Dendritic cell treated with granulocyte-macrophage colony-stimulating factor and Interleukin-4, amounts not matched to agents 40 ng/mL and 50 ng/mL, for 4 days (primary cell): ENCODE measurements at regions of chr3 and their contacts with region 1.

Region 1: DNA sequence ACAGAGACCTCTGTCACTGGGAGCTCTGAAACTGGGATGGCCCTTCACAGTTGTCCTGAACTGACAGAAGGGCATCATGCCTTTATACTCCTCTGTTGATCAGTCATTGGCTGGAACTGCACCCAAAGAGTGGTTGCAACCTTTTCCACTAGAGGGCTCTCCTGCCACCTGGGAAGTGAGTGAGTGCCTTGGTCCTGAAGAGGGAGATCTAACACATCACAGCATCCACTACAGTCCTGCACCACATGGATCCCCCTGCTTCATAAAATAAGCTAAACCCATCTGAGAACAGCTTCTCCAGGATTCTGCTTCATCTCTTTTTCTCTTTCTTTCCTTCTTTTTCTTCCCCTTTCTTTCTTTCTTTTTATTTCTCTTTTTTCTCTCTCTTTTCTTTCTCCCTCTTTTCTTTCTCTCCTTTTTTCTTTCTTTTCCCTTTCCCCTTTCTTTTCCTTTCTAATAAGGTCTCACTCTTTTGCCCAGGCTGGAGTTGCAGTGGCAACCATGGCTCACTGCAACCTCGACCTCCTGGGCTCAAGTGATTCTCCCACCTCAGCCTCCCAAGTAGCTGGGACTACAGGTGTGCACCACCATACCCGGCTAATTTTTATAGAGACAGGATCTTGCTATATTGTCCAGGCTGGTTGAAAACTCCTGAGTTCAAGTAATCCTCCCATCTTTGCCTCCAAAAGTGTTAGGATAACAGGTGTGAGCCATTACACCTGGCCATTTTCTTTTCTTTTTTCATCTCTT is 42.8 kb upstream of the RAF1 start:
- H3K4me3 Mint-ChIP-seq: no peak overlapping the region
- H3K27ac Mint-ChIP-seq: no peak overlapping the region
- H3K4me1 Mint-ChIP-seq: peaks cover 12% of the 10 kb centered on the region
- H3K27me3 Mint-ChIP-seq: peaks cover 5% of the 10 kb centered on the region

Region 2: DNA sequence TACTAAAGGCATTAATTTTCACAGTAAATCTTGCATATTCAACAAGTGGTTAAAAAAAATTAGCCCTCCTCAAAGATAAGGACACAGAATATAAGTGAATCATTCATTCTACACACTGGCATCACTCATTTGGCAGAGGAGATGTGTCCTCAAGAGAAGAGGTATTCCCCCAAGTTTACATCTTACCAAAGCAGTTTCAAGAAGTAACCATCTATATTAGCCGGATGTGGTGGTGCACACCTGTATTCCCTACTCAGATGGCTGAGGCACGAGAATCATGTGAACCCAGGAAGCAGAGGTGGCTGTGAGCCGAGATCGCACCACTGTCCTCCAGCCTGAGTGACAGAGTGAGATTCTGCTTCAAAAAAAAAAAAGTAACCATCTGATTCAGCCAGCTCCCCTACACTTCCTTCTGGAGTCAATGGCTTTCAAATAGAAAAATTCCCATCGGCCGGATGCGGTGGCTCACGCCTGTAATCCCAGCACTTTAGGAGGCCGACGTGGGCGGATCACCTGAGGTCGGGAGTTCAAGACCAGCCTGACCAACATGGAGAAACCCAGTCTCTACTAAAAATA is 58.2 kb before region 1 on chr3:
- intact Hi-C with region 1: no loop called
- H3K4me3 Mint-ChIP-seq: no peak overlapping the region
- H3K27ac Mint-ChIP-seq: peak overlapping the region; percentile 41
- H3K4me1 Mint-ChIP-seq: peaks cover 46% of the 10 kb centered on the region
- H3K27me3 Mint-ChIP-seq: no peaks in the 10 kb centered on the region

Region 3: GRCh38 chr3:12741209-12741608 is 34.5 kb after region 1 on chr3:
- intact Hi-C with region 1: no loop called
- H3K4me3 Mint-ChIP-seq: no peak overlapping the region
- H3K27ac Mint-ChIP-seq: no peak overlapping the region
- H3K4me1 Mint-ChIP-seq: no peaks in the 10 kb centered on the region
- H3K27me3 Mint-ChIP-seq: peaks cover 8% of the 10 kb centered on the region

Region 4: GRCh38 chr3:12810013-12810780 is 103.5 kb after region 1 on chr3:
- intact Hi-C with region 1: loop called (anchors 10 kb)
- H3K4me3 Mint-ChIP-seq: peak overlapping the region; percentile 74
- H3K27ac Mint-ChIP-seq: no peak overlapping the region
- H3K4me1 Mint-ChIP-seq: peaks cover 6% of the 10 kb centered on the region
- H3K27me3 Mint-ChIP-seq: peaks cover 17% of the 10 kb centered on the region

Region 5: GRCh38 chr3:12841149-12841970 is 134.7 kb after region 1 on chr3 and contains the start of gene RPL32:
- intact Hi-C with region 1: loop called (anchors 10 kb)
- H3K4me3 Mint-ChIP-seq: peak within 1 kb of the TSS; percentile 92
- H3K27ac Mint-ChIP-seq: peak within 1 kb of the TSS; percentile 96
- H3K4me1 Mint-ChIP-seq: peaks cover 49% of the 10 kb centered on the region
- H3K27me3 Mint-ChIP-seq: no peaks in the 10 kb centered on the region